Activated CD4-positive, alpha-beta T cell treated with anti-CD3 and anti-CD28 coated beads for 36 hours (primary cell): ENCODE measurements at regions of chr5 and their contacts with region 1.

Region 1: DNA sequence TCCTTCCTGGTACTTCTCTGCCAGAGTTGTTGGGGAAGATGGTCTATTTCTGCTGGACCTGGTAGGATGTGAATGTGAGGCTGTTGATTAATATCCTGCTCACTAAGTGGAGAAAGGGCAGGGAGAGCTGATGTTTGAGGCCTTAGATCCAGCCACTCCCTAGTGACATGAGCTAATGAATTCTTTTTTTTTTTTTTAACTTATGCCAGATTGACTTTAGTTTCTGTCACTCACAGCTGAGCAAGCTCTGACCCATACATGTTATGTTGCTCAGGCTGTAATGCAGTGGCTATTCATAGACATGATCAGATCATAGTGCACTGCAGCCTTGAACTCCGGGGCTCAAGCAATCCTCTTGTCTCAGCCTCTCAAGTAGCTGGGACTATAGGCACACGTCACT is 75.1 kb upstream of the SPRY4 start:
- DNase-seq: no peak
- ATAC-seq: no peak
- H3K4me3 Mint-ChIP-seq: no peak overlapping the region
- H3K27ac Mint-ChIP-seq: no peak overlapping the region
- H3K4me1 Mint-ChIP-seq: no peaks in the 10 kb centered on the region
- H3K27me3 Mint-ChIP-seq: no peaks in the 10 kb centered on the region

Region 2: DNA sequence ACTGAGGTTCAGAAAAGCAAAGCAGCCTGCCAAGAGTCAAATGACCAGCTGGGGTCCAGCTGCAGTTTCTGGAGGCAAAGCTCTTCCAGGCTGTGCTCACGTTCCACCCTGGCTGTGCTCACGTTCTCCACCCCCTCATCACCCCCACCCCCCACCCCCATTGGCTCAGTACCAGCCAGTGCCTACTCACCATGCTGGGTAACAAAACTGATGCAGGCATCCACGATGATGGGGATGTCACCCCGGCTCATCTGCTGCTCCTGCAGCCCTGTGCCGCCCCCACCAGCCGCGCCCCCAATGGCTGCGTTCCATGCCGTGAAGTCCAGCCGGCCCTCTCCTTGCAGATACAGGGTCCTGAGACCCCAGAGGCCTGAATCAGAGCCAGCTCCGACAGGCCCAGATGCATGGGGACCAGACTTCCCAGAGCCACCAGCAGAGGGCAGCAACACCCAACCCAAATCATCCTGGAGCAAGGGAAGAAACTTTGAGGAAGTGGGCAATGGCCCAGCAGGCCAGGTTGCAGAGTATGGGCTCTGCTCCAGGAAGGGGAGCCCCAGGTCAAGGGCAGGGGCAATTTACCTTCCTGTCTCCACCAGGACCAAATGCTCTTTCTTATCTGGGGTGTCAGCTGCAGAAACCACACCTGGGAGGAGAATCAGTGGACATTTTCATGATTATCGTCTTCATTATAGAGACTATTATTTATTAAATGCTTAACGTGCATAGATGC is 735.0 kb before region 1 on chr5:
- CTCF ChIA-PET with region 1: no interaction called
- POLR2A ChIA-PET with region 1: no interaction called
- intact Hi-C with region 1: no loop called
- DNase-seq: peak; percentile 86
- ATAC-seq: peak; percentile 97
- H3K4me3 Mint-ChIP-seq: no peak overlapping the region
- H3K27ac Mint-ChIP-seq: no peak overlapping the region
- H3K4me1 Mint-ChIP-seq: peaks cover 4% of the 10 kb centered on the region
- H3K27me3 Mint-ChIP-seq: no peaks in the 10 kb centered on the region

Region 3: DNA sequence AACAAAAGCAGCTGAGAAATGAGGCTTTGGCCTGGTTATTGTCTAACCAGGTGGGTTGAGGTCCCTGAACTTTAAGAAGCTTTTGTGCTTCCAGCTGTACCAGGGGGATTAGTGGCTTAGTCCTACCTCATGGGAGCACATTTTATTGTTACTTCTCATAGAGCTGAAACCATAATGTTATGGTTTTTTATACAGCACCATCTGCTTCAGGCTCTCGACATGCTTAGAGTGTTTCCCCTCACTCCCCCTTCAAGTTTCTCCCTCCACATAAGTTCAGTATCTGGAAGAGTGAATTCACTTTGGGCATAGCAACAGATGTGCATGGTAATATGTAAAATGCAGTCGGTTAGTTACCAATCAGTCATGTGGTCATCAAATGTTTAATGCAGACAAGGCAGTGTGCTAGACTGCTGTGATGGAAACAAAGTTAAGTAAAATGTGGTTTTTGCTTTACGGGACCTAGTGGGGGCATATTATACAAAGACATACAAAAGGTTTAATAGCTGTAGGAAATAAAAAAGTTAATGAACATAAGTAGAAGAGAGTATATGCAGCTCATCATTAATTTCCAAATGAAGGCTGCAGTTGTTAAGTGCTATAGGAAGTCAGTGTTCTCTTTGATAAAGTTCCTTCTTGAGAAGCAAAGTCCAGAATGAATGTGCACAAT is 20.8 kb after region 1 on chr5:
- CTCF ChIA-PET with region 1: interaction called, 13 read pairs
- POLR2A ChIA-PET with region 1: no interaction called
- intact Hi-C with region 1: no loop called
- DNase-seq: no peak
- ATAC-seq: no peak
- H3K4me3 Mint-ChIP-seq: no peak overlapping the region
- H3K27ac Mint-ChIP-seq: no peak overlapping the region
- H3K4me1 Mint-ChIP-seq: peaks cover 26% of the 10 kb centered on the region
- H3K27me3 Mint-ChIP-seq: no peaks in the 10 kb centered on the region